Naive thymus-derived CD4-positive, alpha-beta T cell (primary cell): ENCODE measurements at regions of chr14 and their contacts with region 1.

Region 1: DNA sequence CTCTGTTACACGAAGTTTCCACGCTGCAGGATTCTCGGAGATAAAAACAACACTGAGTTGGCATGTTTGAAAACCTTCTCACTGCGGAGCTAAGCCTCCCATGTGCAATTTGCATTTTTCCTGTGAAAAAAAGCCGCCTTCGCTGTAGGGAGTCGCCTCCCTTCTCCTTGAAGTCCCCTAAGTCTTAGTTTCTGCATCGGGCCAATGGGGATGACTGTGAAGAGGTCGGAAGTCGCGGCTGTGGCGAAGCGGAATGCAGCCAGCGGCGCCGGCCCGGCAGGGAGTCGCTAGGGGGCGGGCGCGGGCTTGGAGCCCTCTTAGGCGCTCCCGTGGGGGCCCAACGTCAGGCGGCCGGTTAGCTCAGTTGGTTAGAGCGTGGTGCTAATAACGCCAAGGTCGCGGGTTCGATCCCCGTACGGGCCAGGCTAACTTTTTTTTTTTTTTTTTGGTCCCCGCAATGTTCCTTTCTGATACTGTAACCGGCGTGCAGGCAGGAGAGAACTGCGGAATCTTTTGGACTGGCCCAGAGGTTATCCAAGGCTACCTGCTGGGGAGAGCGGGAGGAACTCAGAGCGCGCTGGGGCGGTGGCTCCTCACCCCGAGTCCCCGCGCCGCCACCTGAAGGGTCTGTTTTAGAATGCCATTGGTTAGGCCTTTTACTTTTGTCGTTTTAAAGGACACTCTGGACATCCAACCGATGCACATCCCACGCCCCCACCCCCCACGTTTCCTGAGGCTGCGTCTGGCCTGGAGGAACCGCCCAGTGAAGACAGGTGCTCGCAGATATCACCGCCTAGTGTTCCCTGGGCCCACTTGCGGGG is 2.6 kb upstream of the ZNF839 start:
- DNase-seq: peak; percentile 90 to 99 (median 95)
- ATAC-seq: peak; percentile 77
- H3K4me3 ChIP-seq: peak overlapping the region; percentile 84
- H3K4me3 Mint-ChIP-seq: peak overlapping the region; percentile 91 to 99 (median 97)
- H3K27ac ChIP-seq: peak overlapping the region; percentile 62
- H3K27ac Mint-ChIP-seq: peak overlapping the region; percentile 95 to 99 (median 98)
- H3K4me1 ChIP-seq: peaks cover 37 to 43% of the 10 kb centered on the region in 2 donors
- H3K4me1 Mint-ChIP-seq: peaks cover 34 to 76% (median 64%) of the 10 kb centered on the region in 7 donors
- H3K27me3 ChIP-seq: no peaks in the 10 kb centered on the region
- H3K27me3 Mint-ChIP-seq: peaks cover 0 to 6% (median 0%) of the 10 kb centered on the region in 5 donors

Region 2: DNA sequence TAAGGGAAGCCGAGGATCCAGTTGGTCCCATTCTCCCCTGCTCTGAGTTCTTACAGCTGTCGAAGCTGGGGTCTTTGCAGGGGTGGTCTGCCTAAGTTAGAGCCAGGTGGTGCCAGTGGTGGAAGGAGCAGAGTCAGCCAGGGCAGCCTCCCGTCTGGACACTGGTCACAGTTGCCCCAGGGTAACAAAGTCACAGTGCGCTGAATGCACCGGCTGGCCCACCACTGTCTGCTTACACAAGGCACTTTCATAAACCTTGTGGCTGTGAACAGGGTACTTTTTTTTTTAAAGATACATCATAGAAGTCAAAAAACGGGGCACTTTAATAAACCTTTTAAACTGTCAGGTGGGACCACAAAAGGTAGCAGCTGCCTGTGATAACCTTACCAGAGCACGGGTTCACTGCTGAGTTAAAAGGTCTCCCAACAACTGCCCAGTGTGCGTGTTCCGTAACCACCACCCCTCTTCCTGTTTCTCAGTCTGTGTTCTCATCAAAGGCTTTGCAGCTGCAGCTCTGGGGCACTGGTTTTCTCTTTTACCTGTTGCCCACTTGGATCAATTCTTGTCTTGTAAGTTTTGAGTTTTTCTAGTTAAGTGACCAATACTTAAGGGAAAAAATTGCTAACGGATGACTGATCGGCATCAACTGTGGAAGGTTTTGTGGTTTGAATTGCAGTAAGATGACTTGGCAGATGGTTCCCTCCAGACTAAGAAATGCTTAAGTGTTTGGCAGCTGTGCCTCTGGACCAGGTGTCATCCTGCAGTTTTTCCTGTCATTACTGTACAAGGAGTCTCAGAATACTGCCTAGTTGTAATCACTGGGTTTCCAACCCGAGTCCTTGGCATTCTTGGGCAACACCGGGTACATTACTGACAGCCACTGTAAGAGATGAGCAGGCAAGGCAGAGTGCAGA is 296.6 kb before region 1 on chr14:
- CTCF ChIA-PET with region 1: interaction called, 4 read pairs
- POLR2A ChIA-PET with region 1: no interaction called
- intact Hi-C with region 1: loop called in 1 of 2 experiments (anchors 1 kb)
- DNase-seq: peak in 8 of 9 donors; percentile 35 to 71 (median 60)
- ATAC-seq: peak; percentile 82
- H3K4me3 ChIP-seq: no peak overlapping the region
- H3K4me3 Mint-ChIP-seq: peak overlapping the region; percentile 9 to 81 (median 60)
- H3K27ac ChIP-seq: peak overlapping the region; percentile 51
- H3K27ac Mint-ChIP-seq: peak overlapping the region; percentile 76 to 94 (median 89)
- H3K4me1 ChIP-seq: peaks cover 0 to 14% of the 10 kb centered on the region in 2 donors
- H3K4me1 Mint-ChIP-seq: peaks cover 11 to 23% (median 15%) of the 10 kb centered on the region in 7 donors
- H3K27me3 ChIP-seq: no peaks in the 10 kb centered on the region
- H3K27me3 Mint-ChIP-seq: no peaks in the 10 kb centered on the region

Region 3: DNA sequence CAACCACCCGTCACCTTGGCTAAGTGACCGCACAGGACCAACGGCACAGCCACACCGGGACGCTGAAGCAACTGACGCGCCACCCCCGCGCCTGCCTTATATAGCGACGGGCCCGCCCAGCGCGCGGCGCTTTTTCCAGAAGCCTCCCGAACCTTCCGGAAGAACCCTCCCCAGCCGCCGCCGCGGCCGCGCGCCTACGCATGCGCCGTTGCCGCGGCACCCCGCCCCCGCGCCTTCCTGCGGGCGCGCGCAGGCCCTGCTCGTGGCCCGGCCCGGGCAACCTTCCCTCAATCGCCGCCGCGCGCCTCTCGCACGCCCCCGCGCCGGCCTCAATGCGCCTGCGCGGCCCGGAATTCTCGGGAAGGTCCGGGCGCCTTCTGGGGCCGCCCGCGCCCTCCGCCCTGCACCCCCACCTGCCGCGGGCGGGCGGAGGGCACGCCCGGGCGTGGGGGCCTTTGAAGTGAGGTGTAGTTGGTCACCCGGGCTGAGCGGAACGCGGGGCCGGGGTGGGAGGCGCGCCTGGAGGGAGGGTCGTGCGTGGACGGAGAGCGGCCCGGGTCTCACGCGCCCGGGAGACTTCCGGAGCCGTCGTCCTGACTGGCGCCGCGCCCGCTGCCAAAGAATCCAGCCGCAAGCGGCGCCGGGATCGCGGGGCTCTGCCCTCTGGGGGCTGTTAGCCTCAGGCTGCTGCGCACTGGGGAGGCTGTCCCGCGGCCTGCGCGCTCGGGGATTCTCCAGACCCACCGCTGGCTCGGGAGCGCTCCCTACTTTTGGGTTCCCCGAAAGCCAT is 229.8 kb before region 1 on chr14 and contains the start of gene HSP90AA1:
- CTCF ChIA-PET with region 1: no interaction called
- POLR2A ChIA-PET with region 1: no interaction called
- intact Hi-C with region 1: loop called (anchors 1 to 2 kb)
- DNase-seq: peak; percentile 89 to 99 (median 94)
- ATAC-seq: peak; percentile 87
- H3K4me3 ChIP-seq: peak within 1 kb of the TSS; percentile 91
- H3K4me3 Mint-ChIP-seq: peak within 1 kb of the TSS; percentile 90 to 98 (median 96)
- H3K27ac ChIP-seq: peak within 1 kb of the TSS; percentile 98
- H3K27ac Mint-ChIP-seq: peak within 1 kb of the TSS; percentile 93 to 98 (median 96)
- H3K4me1 ChIP-seq: peaks cover 41 to 43% of the 10 kb centered on the region in 2 donors
- H3K4me1 Mint-ChIP-seq: peaks cover 44 to 70% (median 62%) of the 10 kb centered on the region in 7 donors
- H3K27me3 ChIP-seq: no peaks in the 10 kb centered on the region
- H3K27me3 Mint-ChIP-seq: no peaks in the 10 kb centered on the region
- total RNA-seq, gene HSP90AA1: 229 to 591 (median 361) TPM

Region 4: GRCh38 chr14:102235275-102235897 is 81.6 kb before region 1 on chr14:
- CTCF ChIA-PET with region 1: interaction called, 6 read pairs
- POLR2A ChIA-PET with region 1: interaction called, 3 read pairs
- intact Hi-C with region 1: loop called (anchors 1 kb)
- DNase-seq: peak; percentile 39 to 77 (median 67)
- ATAC-seq: peak; percentile 91
- H3K4me3 ChIP-seq: no peak overlapping the region
- H3K4me3 Mint-ChIP-seq: no peak overlapping the region
- H3K27ac ChIP-seq: no peak overlapping the region
- H3K27ac Mint-ChIP-seq: no peak overlapping the region
- H3K4me1 ChIP-seq: no peaks in the 10 kb centered on the region
- H3K4me1 Mint-ChIP-seq: no peaks in the 10 kb centered on the region
- H3K27me3 ChIP-seq: no peaks in the 10 kb centered on the region
- H3K27me3 Mint-ChIP-seq: no peaks in the 10 kb centered on the region

Region 5: GRCh38 chr14:102362545-102363181 is 45.7 kb after region 1 on chr14 and contains the starts of genes CINP and TECPR2:
- CTCF ChIA-PET with region 1: interaction called, 3 read pairs
- POLR2A ChIA-PET with region 1: interaction called, 6 read pairs
- intact Hi-C with region 1: loop called (anchors 1 kb)
- DNase-seq: peak; percentile 88 to 95 (median 92)
- ATAC-seq: peak; percentile 97
- H3K4me3 ChIP-seq: peak within 1 kb of the TSS; percentile 96
- H3K4me3 Mint-ChIP-seq: peak within 1 kb of the TSS in 6 of 10 donors; percentile 92 to 97 (median 95)
- H3K27ac ChIP-seq: peak within 1 kb of the TSS; percentile 87
- H3K27ac Mint-ChIP-seq: peak within 1 kb of the TSS; percentile 82 to 99 (median 96)
- H3K4me1 ChIP-seq: peaks cover 6 to 15% of the 10 kb centered on the region in 2 donors
- H3K4me1 Mint-ChIP-seq: peaks cover 17 to 42% (median 36%) of the 10 kb centered on the region in 7 donors
- H3K27me3 ChIP-seq: no peaks in the 10 kb centered on the region
- H3K27me3 Mint-ChIP-seq: no peaks in the 10 kb centered on the region
- total RNA-seq, gene CINP: 16.8 to 34.4 (median 31.8) TPM
- total RNA-seq, gene TECPR2: 8.7 to 12.9 (median 11.4) TPM

Region 6: DNA sequence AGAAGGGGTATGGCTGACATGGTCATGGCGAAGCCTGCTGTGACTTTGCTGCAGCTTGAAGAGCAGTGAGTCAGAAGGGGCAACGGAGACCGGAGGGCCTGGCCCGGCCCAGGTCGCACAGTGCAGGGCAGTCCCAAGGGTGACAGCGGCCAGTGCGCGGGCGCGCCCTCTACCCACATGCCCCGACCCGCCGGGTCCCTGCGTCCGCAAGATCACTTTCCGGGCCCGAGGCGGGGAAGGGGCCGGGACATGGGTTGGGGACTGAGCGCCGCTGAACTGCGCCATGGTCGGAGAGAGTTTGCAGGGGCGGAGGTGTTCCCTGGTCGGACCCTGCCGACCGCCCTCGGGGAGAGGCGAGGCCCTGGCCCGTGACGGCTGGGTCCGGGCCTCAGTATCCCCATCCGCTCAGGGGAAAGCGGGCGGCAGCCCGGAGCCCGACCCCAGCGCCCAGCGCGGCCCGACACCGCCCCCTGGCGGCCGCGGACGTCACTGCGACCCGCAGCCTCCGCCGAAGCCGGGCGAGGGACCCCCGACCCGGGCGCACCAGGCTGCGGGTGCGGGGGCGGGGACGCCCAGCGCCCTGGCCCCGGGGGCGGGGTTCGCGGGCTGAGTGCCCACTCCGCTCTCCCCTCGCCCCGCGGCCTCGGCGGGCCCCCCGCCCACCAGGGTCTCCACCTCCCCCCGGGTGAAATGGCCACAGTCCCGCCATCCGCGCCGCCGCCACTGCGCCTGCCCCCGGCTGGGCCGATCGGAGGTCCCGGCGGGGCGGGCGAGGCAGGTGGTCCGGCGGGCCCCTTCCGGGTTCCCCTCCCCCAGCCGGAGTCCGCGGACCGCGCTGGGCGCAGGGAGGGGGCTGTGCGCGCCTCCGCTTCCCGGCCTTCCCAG is 199.8 kb after region 1 on chr14:
- CTCF ChIA-PET with region 1: interaction called, 3 read pairs
- POLR2A ChIA-PET with region 1: interaction called, 3 read pairs
- intact Hi-C with region 1: loop called (anchors 1 kb)
- DNase-seq: peak; percentile 32 to 85 (median 58)
- ATAC-seq: peak; percentile 90
- H3K4me3 ChIP-seq: peak overlapping the region; percentile 61
- H3K4me3 Mint-ChIP-seq: peak overlapping the region; percentile 79 to 91 (median 86)
- H3K27ac ChIP-seq: peak overlapping the region; percentile 35
- H3K27ac Mint-ChIP-seq: peak overlapping the region in 4 of 9 donors; percentile 32 to 86 (median 58)
- H3K4me1 ChIP-seq: peaks cover 0 to 3% of the 10 kb centered on the region in 2 donors
- H3K4me1 Mint-ChIP-seq: peaks cover 3 to 6% (median 5%) of the 10 kb centered on the region in 7 donors
- H3K27me3 ChIP-seq: no peaks in the 10 kb centered on the region
- H3K27me3 Mint-ChIP-seq: peaks cover 0 to 8% (median 4%) of the 10 kb centered on the region in 5 donors